PC-9 (cell line): ENCODE measurements at regions of chr10 and their contacts with region 1.

Region 1: DNA sequence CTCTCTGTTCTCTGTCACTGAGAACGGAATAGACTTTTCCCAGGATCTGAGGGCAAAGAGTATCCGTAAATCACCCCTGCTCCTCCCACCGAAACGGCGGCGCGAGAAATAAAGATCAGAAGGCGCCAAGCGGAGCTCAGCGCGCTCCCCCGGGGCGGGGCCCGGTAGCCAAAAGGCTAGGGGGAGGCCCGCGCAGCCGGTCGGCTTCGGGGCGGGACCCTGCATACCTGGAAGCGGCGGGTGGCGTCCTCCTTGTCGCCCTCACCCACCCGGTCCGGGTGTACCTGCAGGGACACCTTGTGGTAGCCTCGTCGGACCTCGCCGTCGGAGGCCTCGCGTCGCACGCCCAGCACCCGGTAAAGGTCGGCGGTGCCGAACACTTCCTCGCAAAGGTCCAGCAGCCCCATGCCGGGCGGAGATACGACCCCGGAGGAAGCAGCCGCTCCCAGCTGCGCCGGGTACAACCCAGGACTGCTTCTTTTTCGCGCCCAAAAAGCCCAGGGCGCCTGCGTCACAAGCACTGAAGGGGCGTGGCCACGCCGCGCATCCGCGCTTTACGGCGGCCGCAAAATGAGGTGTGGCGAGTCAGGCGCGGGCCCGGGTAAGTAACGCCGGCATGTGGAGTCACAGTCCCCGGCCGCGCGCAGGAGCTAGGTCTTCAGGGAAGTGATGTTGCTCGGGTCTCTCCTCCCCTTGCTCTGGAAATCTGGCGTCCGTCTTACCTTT is at the start of gene DNAJC9:
- DNase-seq: peak; percentile 86 to 99
- H3K4me3 ChIP-seq: peak within 1 kb of the TSS; percentile 95
- H3K27ac ChIP-seq: peak within 1 kb of the TSS; percentile 87
- H3K4me1 ChIP-seq: peaks cover 51% of the 10 kb centered on the region
- H3K27me3 ChIP-seq: no peaks in the 10 kb centered on the region
- CTCF ChIP-seq: no peak
- total RNA-seq, gene DNAJC9: 44.8 and 45.6 TPM in 2 replicates

Region 2: GRCh38 chr10:73167783-73168464 is 79.0 kb before region 1 on chr10 and contains the starts of genes ECD and FAM149B1:
- CTCF ChIA-PET with region 1: interaction called, 15 read pairs
- POLR2A ChIA-PET with region 1: interaction called, 4 read pairs
- intact Hi-C with region 1: no loop called
- DNase-seq: peak; percentile 92 to 96
- H3K4me3 ChIP-seq: peak within 1 kb of the TSS; percentile 83
- H3K27ac ChIP-seq: peak within 1 kb of the TSS; percentile 85
- H3K4me1 ChIP-seq: peaks cover 24% of the 10 kb centered on the region
- H3K27me3 ChIP-seq: no peaks in the 10 kb centered on the region
- CTCF ChIP-seq: peak; percentile 36; the same call in 1 of the 2 replicates
- total RNA-seq, gene ECD: 29.3 and 33.2 TPM in 2 replicates
- total RNA-seq, gene FAM149B1: 22.9 and 24.4 TPM in 2 replicates

Region 3: DNA sequence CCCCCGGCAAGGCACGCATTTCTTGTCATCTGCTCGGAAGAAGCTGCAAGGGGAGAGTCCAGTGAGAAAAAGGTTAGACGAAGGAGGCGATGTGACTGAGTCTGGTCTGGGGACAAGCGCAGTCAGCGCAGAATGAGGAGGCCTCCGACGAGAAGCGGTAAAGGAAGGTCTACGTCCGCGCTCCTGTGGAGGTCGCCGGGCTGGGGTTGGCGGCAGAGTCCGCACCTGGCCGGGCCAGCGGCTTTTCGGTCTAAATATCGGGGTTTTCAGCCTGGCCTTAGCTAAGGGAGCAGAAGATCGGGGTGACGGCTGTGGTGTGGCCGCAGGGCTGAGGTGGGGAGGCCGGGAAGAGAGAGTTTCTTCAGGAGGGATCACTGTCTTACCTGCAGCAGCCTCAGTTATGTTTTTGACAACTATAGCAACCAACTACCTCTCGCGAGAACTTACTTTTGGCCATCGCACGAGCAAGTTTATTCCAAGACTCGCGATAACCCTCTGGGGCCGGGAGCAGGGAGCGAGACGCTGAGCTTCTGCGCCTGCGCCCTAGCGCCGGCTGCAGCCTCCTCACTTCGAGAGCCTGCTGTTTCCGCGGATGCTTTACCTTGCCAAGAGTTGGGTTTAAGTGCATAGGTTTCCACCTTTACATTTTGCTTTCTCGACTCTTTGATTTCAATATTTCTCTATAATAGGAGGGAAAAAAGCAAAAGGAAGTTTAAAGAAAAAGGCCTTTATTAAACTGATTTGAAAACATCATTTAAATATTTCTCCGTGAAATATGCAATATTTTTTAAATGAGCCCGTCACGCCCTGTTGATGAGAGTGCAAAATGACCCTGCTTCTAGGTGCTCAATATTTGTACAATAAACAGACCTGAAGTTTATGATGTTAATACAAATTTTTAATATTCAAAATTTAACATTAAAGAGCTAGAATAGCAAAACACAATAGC is 111.7 kb after region 1 on chr10 and contains the start of gene CFAP70:
- CTCF ChIA-PET with region 1: no interaction called
- POLR2A ChIA-PET with region 1: interaction called, 10 read pairs
- intact Hi-C with region 1: loop called (anchors 2 kb)
- DNase-seq: peak; percentile 95
- H3K4me3 ChIP-seq: peak within 1 kb of the TSS; percentile 61
- H3K27ac ChIP-seq: no peak within 1 kb of the TSS
- H3K4me1 ChIP-seq: peaks cover 5% of the 10 kb centered on the region; the same call in 1 of the 2 replicates
- H3K27me3 ChIP-seq: no peaks in the 10 kb centered on the region
- CTCF ChIP-seq: no peak
- total RNA-seq, gene CFAP70: 3.1 and 4.1 TPM in 2 replicates

Region 4: DNA sequence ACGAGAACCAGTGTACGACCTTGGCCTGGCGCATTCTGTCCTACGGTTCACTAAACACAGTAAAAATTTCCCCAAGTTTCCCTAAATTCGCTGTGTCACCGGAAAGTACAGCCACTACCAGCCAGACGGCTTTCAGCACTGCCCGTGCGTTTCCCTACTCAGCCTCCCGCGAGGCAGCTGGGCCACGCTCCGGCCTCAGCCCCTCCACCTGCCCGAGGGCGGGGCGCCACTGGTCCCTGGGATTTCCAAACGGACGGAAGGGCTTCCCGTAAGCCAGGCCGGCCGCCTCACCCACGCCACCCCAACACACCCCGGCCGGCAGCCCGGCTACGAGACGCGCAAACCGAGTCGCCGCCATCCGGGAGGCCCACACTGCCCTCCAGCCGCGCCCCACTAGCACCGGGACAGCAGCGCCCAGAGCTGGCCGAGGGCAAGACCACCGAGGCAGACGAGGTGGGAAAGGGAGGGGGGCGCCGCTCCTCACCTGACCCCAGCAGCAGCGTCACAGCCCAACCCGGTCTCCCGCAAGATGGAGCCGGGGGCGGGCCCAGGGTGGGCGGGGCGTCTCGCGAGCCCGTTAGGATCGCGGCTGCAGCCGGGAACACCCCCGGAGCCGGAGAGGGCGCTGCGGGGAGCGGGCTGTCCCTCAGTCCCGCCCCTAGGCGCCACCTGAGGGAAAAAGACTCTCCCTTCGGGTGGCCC is 166.7 kb after region 1 on chr10 and contains the start of gene ANXA7:
- CTCF ChIA-PET with region 1: no interaction called
- POLR2A ChIA-PET with region 1: interaction called, 15 read pairs
- intact Hi-C with region 1: loop called (anchors 2 kb)
- DNase-seq: peak; percentile 85 to 95
- H3K4me3 ChIP-seq: peak within 1 kb of the TSS; percentile 84
- H3K27ac ChIP-seq: peak within 1 kb of the TSS; percentile 89
- H3K4me1 ChIP-seq: peaks cover 43% of the 10 kb centered on the region
- H3K27me3 ChIP-seq: no peaks in the 10 kb centered on the region
- CTCF ChIP-seq: no peak; the same call in 1 of the 2 replicates
- total RNA-seq, gene ANXA7: 149 and 154 TPM in 2 replicates